GM12878 (cell line): ENCODE measurements at regions of chr10 and their contacts with region 1.

Region 1: DNA sequence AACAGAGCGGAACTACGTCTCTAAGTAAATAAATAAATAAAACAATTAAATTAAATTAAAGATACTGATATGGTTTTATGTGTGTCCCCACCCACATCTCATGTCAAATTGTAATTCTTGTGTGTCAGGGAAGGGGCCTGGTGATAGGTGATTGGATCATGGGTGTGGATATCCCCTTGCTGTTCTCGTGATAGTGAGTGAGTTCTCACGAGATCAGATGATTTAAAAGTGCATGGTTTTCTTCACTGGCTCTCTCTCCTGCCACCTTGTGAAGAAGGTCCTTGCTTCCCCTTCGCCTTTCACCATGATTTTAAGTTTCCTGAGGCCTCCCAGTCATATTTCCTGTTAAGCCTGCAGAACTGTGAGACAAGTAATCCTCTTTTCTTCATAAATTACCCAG is 29.0 kb upstream of the OGDHL start:
- DNase-seq: no peak
- ATAC-seq: no peak
- H3K4me3 ChIP-seq: no peak overlapping the region
- H3K27ac ChIP-seq: no peak overlapping the region
- H3K4me1 ChIP-seq: no peaks in the 10 kb centered on the region
- H3K27me3 ChIP-seq: no peaks in the 10 kb centered on the region
- CTCF ChIP-seq: no peak
- EP300 ChIP-seq: no peak
- POLR2A ChIP-seq: no peak
- RAD21 ChIP-seq: no peak

Region 2: GRCh38 chr10:49827297-49827696 is 36.2 kb after region 1 on chr10:
- CTCF ChIA-PET with region 1: no interaction called
- POLR2A ChIA-PET with region 1: interaction called, 11 read pairs
- RAD21 ChIA-PET with region 1: no interaction called
- SMC1A ChIA-PET with region 1: no interaction called
- in situ Hi-C with region 1: no loop called
- intact Hi-C with region 1: no loop called
- DNase-seq: peak; percentile 31
- ATAC-seq: peak; percentile 88
- H3K4me3 ChIP-seq: no peak overlapping the region
- H3K27ac ChIP-seq: peak overlapping the region; percentile 58
- H3K4me1 ChIP-seq: peaks cover 4% of the 10 kb centered on the region; the same call in 1 of the 2 replicates
- H3K27me3 ChIP-seq: no peaks in the 10 kb centered on the region
- CTCF ChIP-seq: no peak
- EP300 ChIP-seq: 0 out of 4 replicates have a peak, but pooled peaks of 1 of the 2 experiments have one; percentile 11
- POLR2A ChIP-seq: no peak
- RAD21 ChIP-seq: no peak